ENCODE measurements at regions of chr3 and their contacts with region 1.

Region 1: DNA sequence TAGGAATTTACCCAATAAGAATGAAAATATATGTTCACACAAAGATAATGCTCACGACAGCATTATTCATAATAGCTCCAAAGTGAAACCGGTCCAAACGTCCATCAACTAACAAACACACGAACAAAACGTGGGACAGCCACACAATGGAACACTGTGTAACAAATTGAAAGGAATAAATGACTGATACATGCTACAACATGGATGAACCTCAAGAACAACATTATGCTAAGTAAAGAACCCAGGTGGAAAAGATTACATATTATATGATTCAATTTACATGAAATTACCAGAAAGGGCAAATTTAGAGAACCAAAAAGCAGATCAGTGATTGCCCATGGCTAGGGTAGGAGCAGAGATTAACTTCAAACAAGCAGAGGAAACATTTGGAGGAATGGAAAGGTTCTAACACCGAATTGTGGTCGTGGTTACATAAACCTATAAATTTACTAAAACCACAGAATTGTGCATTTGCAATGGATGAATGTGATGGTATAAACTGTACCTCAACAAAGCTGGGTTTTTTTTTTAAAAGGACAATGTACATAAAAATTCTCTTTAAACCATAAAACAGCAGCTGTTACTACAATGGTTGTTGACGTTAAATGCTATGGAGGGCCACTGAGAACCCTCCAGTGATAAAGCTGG is 76.3 kb downstream of the XXYLT1 start:
- DNase-seq: no peak
- H3K4me3 Mint-ChIP-seq: no peak overlapping the region
- H3K27ac Mint-ChIP-seq: peak overlapping the region; percentile 37
- H3K4me1 Mint-ChIP-seq: peaks cover 13% of the 10 kb centered on the region
- H3K27me3 Mint-ChIP-seq: peaks cover 6% of the 10 kb centered on the region

Region 2: DNA sequence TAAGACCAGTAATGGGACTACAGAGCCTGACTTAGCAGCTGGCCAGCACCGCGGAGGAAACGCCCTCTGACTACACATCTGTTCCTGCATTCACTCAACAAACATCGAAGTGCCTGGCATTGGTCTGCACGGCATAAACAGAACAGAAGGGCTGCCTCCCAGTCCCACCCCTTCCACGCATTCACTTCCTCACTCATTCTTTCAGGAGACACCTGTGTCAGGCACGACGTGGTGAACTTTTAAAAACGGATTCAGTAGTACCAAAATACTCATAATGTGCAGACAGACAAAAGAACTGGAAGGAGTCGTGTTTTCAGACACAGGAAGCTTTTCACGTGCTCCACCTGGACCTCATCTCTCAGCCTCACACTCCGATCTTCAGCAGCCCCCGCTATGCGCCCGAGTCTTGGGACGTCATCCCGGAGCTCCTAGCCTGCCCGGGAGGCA is 47.0 kb before region 1 on chr3:
- intact Hi-C with region 1: loop called (anchors 5 kb)
- DNase-seq: peak; percentile 55
- H3K4me3 Mint-ChIP-seq: peak overlapping the region; percentile 82
- H3K27ac Mint-ChIP-seq: peak overlapping the region; percentile 22
- H3K4me1 Mint-ChIP-seq: peaks cover 43% of the 10 kb centered on the region
- H3K27me3 Mint-ChIP-seq: peaks cover 6% of the 10 kb centered on the region

Measured in activated T-helper 1 cell treated with anti-CD3 and anti-CD28 coated beads, Interleukin-12 subunit alpha, Interleukin-12 subunit beta, Interleukin-2, Interleukin-4 antibody, amounts not matched to agents 30 ng/mL and 10 ng/mL and 1 ng/mL, durations not matched to agents 14 hours and 24 hours and 36 hours (primary cell).